ENCODE measurements at regions of chr4 and their contacts with region 1.

Region 1: GRCh38 chr4:139651282-139652194 is 14.1 kb upstream of the MGST2 start:
- DNase-seq: peak; percentile 41
- ATAC-seq: peak; percentile 84
- H3K4me3 Mint-ChIP-seq: no peak overlapping the region
- H3K27ac Mint-ChIP-seq: no peak overlapping the region
- H3K4me1 Mint-ChIP-seq: peaks cover 4% of the 10 kb centered on the region
- H3K27me3 Mint-ChIP-seq: peaks cover 10% of the 10 kb centered on the region
- CTCF ChIP-seq: peak; percentile 80

Region 2: DNA sequence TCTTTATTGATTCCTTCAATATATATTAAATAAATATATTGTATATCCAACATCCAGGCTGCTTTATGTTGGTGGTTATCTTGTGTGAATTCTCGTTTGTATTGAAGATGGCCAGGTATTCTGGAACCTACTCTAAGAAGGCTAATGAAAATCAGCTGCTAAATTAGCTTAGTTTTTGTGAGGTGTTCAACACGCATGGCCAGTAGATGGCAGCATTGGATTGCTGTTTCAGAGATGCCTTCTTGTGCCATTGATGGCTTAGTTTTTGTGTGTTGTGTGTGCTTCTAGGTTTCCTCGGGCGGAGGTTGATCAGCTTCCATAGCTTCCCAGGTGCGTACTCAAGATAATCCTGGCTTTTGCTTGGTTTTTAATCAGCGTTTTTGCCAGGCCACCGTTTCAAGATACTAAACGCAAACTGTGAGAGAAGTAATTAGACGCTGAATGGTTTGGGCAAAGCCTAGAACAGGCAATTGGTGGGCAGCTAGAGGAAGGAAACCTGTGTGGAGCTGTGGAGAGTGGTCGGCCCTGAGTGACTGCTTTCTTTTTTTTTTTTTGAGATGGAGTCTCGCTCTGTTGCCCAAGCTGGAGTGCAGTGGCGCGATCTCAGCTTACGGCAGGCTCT is 620.8 kb before region 1 on chr4:
- CTCF ChIA-PET with region 1: interaction called, 36 read pairs
- POLR2A ChIA-PET with region 1: no interaction called
- intact Hi-C with region 1: loop called (anchors 1 kb)
- DNase-seq: peak; percentile 34
- ATAC-seq: peak; percentile 75
- H3K4me3 Mint-ChIP-seq: peak overlapping the region; percentile 0
- H3K27ac Mint-ChIP-seq: no peak overlapping the region
- H3K4me1 Mint-ChIP-seq: peaks cover 32% of the 10 kb centered on the region
- H3K27me3 Mint-ChIP-seq: no peaks in the 10 kb centered on the region
- CTCF ChIP-seq: peak; percentile 60

Region 3: GRCh38 chr4:139229534-139230039 is 422.0 kb before region 1 on chr4:
- CTCF ChIA-PET with region 1: no interaction called
- POLR2A ChIA-PET with region 1: no interaction called
- intact Hi-C with region 1: loop called (anchors 5 kb)
- DNase-seq: no peak
- ATAC-seq: peak; percentile 61
- H3K4me3 Mint-ChIP-seq: no peak overlapping the region
- H3K27ac Mint-ChIP-seq: no peak overlapping the region
- H3K4me1 Mint-ChIP-seq: peaks cover 3% of the 10 kb centered on the region
- H3K27me3 Mint-ChIP-seq: no peaks in the 10 kb centered on the region
- CTCF ChIP-seq: no peak

Region 4: DNA sequence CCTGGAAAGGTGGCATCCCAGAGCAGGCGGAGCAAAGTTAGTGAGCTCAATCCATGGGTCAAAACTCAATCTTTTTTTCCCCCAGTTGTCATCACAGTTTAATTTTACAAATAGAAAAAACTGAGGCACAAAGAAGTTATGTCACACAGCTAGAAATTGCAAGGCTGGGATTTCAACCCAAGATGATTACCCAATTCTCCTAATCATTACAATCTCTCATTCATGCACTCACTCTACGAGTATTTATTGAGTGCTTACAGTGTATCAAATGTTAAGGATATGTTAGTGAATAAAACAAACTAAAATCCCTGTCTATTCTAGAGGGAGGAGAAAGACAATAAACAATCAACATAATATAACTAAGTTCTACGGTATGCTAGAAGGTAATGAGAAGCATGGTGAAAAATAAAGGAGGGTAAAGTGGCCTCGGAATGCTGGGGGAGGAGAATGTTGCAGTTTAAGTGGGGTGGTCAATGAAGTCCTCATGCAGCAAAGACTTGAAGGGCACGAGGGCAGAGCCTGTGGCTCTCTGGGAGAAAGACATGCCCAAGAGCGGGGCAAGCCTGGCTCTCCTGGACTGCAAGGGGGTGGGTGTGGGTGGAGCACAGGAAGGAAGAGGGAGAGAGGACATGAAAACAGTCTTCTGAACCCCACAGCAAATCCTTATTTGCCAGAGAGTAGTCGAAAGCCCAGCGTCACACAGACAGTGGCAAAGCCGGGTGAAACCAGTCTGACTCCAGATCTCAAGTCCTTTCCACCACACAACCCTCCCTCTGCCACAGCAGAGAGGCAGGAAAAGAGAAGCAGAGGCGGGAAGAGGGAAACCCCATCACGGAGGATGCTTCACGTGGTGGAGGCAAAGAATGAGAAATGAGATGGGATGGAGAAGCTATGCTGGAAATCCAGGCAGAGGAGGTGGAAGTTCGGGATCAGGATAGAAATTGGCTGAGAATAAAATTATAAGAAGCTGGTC is 149.3 kb before region 1 on chr4:
- CTCF ChIA-PET with region 1: no interaction called
- POLR2A ChIA-PET with region 1: no interaction called
- intact Hi-C with region 1: loop called (anchors 1 kb)
- DNase-seq: no peak
- ATAC-seq: no peak
- H3K4me3 Mint-ChIP-seq: no peak overlapping the region
- H3K27ac Mint-ChIP-seq: no peak overlapping the region
- H3K4me1 Mint-ChIP-seq: no peaks in the 10 kb centered on the region
- H3K27me3 Mint-ChIP-seq: no peaks in the 10 kb centered on the region
- CTCF ChIP-seq: no peak

Region 5: GRCh38 chr4:139554893-139555704 is 96.4 kb before region 1 on chr4:
- CTCF ChIA-PET with region 1: interaction called, 4 read pairs
- POLR2A ChIA-PET with region 1: no interaction called
- intact Hi-C with region 1: loop called (anchors 5 kb)
- DNase-seq: peak; percentile 71
- ATAC-seq: peak; percentile 60
- H3K4me3 Mint-ChIP-seq: peak overlapping the region; percentile 95
- H3K27ac Mint-ChIP-seq: peak overlapping the region; percentile 94
- H3K4me1 Mint-ChIP-seq: peaks cover 59% of the 10 kb centered on the region
- H3K27me3 Mint-ChIP-seq: no peaks in the 10 kb centered on the region
- CTCF ChIP-seq: no peak

Region 6: DNA sequence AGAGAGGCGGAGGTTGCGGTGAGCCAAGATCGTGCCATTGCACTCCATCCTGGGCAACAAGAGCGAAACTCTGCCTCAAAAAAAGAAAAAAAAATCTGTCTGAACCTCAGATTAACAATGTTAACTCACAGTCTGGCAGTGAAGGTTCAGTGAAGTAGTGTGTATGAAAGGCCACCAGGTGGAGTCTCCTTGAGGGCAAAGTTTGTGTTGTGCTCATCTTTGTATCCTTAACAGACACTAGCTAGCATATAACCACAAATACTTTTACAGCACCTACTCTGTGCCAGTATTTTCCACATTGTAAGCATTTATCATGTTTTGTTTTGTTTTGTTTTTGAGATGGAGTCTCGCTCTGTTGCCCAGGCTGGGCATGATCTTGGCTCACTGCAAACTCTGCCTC is 31.9 kb before region 1 on chr4:
- CTCF ChIA-PET with region 1: no interaction called
- POLR2A ChIA-PET with region 1: no interaction called
- intact Hi-C with region 1: loop called (anchors 5 kb)
- DNase-seq: no peak
- ATAC-seq: peak; percentile 31
- H3K4me3 Mint-ChIP-seq: no peak overlapping the region
- H3K27ac Mint-ChIP-seq: no peak overlapping the region
- H3K4me1 Mint-ChIP-seq: no peaks in the 10 kb centered on the region
- H3K27me3 Mint-ChIP-seq: peaks cover 12% of the 10 kb centered on the region
- CTCF ChIP-seq: no peak